H1 (cell line): ENCODE measurements at regions of chr7 and their contacts with region 1.

Region 1: DNA sequence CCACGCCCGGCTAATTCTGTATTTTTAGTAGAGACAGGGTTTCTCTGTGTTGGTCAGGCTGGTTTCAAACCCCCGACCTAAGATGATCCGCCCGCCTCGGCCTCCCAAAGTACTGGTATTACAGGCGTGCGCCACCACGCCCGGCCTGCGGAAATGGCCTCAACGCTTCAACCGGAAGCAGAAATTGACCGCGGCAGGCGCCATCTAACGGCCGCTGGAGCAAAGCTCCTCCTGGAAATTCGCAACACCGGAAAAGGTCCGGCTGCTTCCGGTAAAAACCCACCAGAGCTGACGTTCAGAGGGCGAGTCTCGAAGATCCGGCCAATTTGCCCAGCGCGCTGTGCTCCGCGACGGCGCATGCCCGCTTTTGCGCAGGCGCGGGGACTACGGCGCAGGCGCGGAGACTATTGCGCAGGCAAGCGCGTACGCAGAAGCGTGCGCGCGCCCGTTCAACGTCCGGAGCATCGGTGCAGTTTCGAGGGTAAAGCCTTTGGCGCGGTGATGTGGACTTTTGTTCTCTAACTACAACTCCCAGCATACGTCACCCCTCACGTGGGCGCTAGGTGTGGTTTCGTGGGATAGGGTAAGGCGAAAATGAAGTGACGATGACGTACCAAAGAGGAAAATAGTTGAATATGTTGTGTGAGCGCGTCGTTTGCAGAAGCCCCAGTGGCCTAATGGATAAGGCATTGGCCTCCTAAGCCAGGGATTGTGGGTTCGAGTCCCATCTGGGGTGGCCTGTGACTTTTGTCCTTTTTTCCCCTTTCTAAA is 915 bp upstream of the FMC1 start:
- DNase-seq: peak; percentile 94 to 98
- H3K4me3 ChIP-seq: peak overlapping the region; percentile 79 to 98 (median 92)
- H3K27ac ChIP-seq: peak overlapping the region; percentile 99
- H3K4me1 ChIP-seq: peaks cover 0 to 5% (median 4%) of the 10 kb centered on the region in 4 experiments; a peak in 5 of 7 replicates
- H3K27me3 ChIP-seq: peaks cover 0 to 1% (median 0%) of the 10 kb centered on the region in 4 experiments; a peak in 1 of 7 replicates
- CTCF ChIP-seq: peak; percentile 76 to 87 (median 79)
- EP300 ChIP-seq: peak in 1 of 2 experiments; percentile 75; a peak in 2 of 3 replicates
- POLR2A ChIP-seq: peak in 1 of 2 experiments; percentile 65; a peak in 1 of 3 replicates
- RAD21 ChIP-seq: peak; percentile 23 to 43; a peak in 3 of 4 replicates

Region 2: DNA sequence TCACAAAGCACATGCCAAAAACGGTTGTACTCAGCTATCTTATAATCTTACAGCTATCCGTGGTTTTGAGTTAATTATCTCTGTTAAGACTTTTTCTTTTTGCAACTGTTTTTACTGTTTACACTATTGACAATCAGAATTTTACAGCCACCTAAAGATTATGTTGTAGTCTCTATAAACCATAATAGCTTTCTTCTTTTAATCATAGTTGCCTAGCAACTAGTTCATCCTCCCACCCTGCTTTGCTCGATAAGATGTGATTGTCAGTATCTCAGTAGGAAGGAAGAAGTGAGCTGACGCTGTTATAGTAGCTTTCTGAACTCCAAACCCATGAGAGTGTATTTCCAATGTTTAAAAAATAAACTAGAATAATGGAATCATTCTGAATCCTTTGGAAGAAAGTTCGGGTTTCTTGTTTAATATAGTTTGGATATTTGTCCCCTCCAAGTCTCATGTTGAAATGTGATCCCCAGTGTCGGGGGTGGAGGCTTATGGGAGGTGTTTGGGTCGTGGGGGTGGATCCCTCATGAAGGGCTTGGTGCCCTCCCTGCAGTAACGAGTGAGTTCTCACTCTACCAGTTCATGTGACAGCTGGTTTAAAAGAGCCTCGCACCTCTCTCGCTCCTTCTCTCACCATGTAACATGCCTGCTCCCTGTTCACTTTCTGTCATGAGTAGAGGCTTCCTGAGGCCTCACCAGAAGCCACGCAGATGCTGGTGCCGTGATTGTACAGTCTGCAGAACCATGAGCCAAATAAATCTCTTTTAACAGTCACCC is 707.2 kb before region 1 on chr7:
- CTCF ChIA-PET with region 1: no interaction called
- POLR2A ChIA-PET with region 1: no interaction called
- DNase-seq: no peak
- H3K4me3 ChIP-seq: no peak overlapping the region
- H3K27ac ChIP-seq: no peak overlapping the region
- H3K4me1 ChIP-seq: no peaks in the 10 kb centered on the region; a peak in 1 of 7 replicates
- H3K27me3 ChIP-seq: no peaks in the 10 kb centered on the region
- CTCF ChIP-seq: no peak
- EP300 ChIP-seq: no peak
- POLR2A ChIP-seq: no peak
- RAD21 ChIP-seq: no peak

Region 3: DNA sequence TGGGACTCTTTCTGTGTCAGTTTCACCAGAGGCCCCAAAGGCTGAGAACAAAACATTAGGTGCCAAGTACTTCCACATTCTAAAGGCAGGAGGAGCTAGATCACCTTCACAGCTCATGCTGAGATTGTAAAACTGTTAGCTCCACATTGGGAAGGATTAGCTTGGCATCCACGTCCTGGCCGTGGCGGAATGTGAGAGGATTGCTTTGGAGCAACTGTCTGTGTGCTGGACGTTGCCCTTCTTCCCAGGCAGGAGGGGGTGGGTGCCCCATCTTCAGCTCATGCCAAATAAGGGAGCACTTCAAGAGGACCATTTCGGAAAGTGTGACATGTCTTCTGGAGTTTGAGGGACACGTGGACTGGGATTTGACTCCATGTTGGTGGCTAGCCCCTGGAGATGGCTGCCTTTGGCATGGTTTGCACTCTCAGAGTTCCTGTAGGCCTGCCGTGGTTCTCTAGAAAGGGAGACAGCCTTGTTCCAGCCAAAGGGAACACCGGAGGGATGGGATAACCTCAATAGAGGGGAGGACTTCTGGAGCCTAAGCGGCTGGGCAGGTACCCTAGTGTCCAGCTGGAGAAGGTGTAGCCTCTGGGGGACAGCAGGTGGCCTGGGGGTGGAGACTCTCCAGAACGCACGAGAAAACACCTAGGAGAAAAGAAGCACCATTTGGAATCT is 19.0 kb before region 1 on chr7:
- CTCF ChIA-PET with region 1: interaction called, 54 read pairs
- POLR2A ChIA-PET with region 1: interaction called, 3 read pairs
- DNase-seq: peak; percentile 5 to 44
- H3K4me3 ChIP-seq: no peak overlapping the region
- H3K27ac ChIP-seq: no peak overlapping the region
- H3K4me1 ChIP-seq: peaks cover 0 to 4% (median 0%) of the 10 kb centered on the region in 4 experiments; a peak in 4 of 7 replicates
- H3K27me3 ChIP-seq: no peaks in the 10 kb centered on the region
- CTCF ChIP-seq: peak in 2 of 3 experiments; percentile 49 to 74; a peak in 3 of 4 replicates
- EP300 ChIP-seq: no peak
- POLR2A ChIP-seq: no peak
- RAD21 ChIP-seq: peak; percentile 57 to 73

Region 4: DNA sequence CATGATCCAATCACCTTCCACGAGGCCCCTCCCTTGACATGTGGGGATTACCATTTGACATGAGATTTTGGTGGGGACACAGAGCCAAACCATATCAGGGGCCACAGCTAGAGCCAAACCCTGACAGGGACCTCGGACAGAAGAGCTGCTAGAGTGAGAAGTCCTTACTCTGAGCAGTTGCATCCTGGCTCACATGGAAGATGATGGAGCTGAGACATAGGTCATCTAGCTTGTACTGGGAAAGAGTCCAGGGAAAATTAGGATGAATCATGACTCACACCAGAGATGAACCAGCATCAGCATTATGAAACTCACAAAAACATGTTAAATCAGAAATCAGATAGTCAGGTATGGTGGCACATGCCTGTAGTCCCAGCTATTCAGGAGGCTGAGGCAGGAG is 11.8 kb before region 1 on chr7:
- CTCF ChIA-PET with region 1: interaction called, 25 read pairs
- POLR2A ChIA-PET with region 1: interaction called, 4 read pairs
- DNase-seq: no peak
- H3K4me3 ChIP-seq: no peak overlapping the region
- H3K27ac ChIP-seq: no peak overlapping the region
- H3K4me1 ChIP-seq: no peaks in the 10 kb centered on the region
- H3K27me3 ChIP-seq: no peaks in the 10 kb centered on the region
- CTCF ChIP-seq: no peak
- EP300 ChIP-seq: no peak
- POLR2A ChIP-seq: no peak
- RAD21 ChIP-seq: no peak

Region 5: DNA sequence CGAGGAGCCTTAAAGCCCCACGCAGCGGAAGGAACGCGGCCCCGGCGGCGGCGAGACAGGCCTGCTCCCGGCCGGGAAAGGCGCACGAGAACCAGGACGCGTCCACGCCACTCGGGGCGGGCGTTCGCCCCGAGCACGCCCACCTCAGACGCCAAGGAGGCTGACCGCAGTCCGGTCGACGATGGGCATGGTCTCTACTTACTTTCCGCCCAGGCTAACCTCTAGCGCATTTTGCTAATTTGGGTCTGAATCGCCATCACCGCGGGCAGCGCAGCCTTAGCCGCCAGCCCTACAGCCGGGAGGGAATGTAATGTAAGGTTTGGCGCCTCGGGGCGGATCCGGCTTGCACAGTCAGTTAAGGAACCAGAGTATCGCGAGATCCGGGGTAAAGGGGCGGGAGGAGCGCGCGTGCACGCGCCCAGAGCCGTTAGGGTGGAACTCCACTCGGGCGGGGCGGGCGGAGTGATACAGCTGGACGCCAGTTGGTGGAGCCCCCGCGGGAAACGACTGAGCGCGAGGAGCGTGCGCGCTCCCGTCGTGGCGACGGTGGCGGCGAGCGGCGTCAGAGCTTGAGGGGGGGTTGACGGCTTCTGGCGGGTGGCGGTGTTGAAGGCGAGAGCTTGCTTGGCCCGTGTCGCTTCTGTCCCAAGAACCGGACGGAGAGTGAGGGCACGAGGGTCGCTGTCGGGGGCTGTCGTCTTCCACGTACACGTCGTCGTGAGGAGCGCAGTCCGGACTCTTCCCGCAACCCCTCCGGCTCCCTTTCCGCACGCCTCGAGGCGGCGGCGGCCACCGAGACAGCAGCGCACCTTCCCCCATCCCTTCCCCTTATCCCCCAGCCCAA is 19.4 kb after region 1 on chr7 and contains the start of gene LUC7L2:
- CTCF ChIA-PET with region 1: interaction called, 5 read pairs
- POLR2A ChIA-PET with region 1: interaction called, 30 read pairs
- DNase-seq: peak; percentile 96 to 99
- H3K4me3 ChIP-seq: peak within 1 kb of the TSS; percentile 88 to 99 (median 94)
- H3K27ac ChIP-seq: peak within 1 kb of the TSS; percentile 94
- H3K4me1 ChIP-seq: peaks cover 5 to 9% (median 7%) of the 10 kb centered on the region in 4 experiments
- H3K27me3 ChIP-seq: no peaks in the 10 kb centered on the region
- CTCF ChIP-seq: peak in 1 of 3 experiments; percentile 14; a peak in 1 of 4 replicates
- EP300 ChIP-seq: no peak
- POLR2A ChIP-seq: peak; percentile 90 to 95
- RAD21 ChIP-seq: no peak; a peak in 1 of 4 replicates
- total RNA-seq, gene LUC7L2: 64.1 and 67.8 TPM in 2 replicates

Region 6: GRCh38 chr7:139562961-139563565 is 222.8 kb after region 1 on chr7:
- CTCF ChIA-PET with region 1: no interaction called
- POLR2A ChIA-PET with region 1: no interaction called
- DNase-seq: no peak
- H3K4me3 ChIP-seq: no peak overlapping the region
- H3K27ac ChIP-seq: no peak overlapping the region
- H3K4me1 ChIP-seq: peaks cover 0 to 14% (median 4%) of the 10 kb centered on the region in 4 experiments; a peak in 3 of 7 replicates
- H3K27me3 ChIP-seq: no peaks in the 10 kb centered on the region
- CTCF ChIP-seq: no peak
- EP300 ChIP-seq: no peak
- POLR2A ChIP-seq: no peak
- RAD21 ChIP-seq: no peak